Left colon (tissue), 2 donors: ENCODE measurements at regions of chr20 and their contacts with region 1.

Region 1: GRCh38 chr20:59222253-59223181 is 58.9 kb downstream of the ZNF831 start:
- DNase-seq: peak; percentile 62 to 89
- ATAC-seq: peak; percentile 98

Region 2: DNA sequence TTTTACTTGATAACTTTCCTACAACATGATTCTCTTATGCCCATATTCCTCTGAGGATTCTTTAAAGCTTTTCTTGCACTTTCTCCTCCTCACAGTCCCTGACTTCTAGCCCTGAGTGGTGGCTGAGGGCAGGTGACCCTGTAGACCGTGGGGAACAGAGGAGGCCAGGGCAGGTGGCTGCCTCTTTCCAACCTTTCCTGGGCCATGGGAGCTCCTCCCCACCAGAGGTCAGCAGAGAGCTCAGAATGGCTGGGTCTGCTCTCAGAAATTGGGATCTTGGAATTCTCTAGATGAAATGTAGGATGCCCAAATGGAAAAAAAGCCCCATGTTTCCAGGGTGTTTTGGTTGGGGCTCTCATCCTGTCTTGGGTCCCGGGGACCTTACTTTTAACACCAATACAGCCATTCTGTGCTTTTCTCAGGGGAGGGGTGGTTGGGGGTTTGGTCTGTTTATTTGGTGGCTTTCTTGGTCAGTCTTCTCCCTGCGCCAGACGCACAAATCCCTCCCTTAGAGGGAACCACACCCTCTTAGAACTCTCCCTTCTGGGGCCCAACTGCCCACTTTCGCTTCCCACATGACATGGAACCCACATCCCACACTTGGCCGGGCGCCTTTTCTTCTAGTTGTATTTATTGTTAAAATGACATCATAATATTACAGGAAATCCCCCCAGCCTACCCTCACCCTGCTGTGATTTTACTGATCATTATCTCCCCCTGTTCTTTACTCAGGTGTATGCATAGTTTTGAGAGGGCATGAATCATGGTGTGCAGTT is 352.1 kb before region 1 on chr20:
- intact Hi-C with region 1: loop called (anchors 5 kb)
- DNase-seq: peak; percentile 56 to 79
- ATAC-seq: peak; percentile 90

Region 3: DNA sequence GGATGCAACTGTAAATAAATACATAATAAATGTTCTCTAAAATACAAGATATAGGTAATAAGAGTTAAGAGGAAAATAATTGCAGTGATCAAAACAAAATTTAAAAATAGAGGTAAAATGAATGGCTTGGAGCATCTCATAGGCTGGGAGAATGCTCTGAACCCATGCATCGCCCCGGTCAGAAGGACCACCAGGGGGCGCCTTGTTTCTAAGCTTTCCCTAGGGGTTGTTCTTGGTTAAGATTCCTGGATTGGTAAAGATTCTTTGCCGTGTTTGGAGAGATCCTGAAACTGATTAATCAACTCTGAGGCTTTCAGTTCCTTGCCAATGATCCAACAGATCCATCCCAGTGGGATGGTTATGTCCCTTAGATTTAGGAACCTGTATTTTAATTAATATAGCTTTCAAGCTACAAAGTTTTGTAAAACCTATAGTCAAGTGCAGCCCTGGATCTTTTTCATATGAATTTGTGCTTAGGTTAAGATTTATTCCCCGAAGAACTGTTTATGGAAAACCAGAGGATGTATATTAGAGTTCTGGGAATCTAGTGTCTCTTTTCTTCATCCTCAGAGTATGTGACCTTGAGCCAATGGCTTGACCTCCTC is 134.6 kb before region 1 on chr20:
- intact Hi-C with region 1: loop called (anchors 5 to 10 kb)
- DNase-seq: peak; percentile 60 to 93
- ATAC-seq: peak; percentile 94